ENCODE measurements at regions of chr10 and their contacts with region 1.

Region 1: GRCh38 chr10:110304780-110305421 is at the start of gene SMNDC1:
- DNase-seq: peak; percentile 99
- H3K4me3 Mint-ChIP-seq: peak within 1 kb of the TSS; percentile 95
- H3K27ac Mint-ChIP-seq: peak within 1 kb of the TSS; percentile 97
- H3K4me1 Mint-ChIP-seq: peaks cover 51% of the 10 kb centered on the region
- H3K27me3 Mint-ChIP-seq: no peaks in the 10 kb centered on the region
- total RNA-seq, gene SMNDC1: 42.4 to 46.2 TPM

Region 2: GRCh38 chr10:109529258-109529657 is 775.6 kb before region 1 on chr10:
- CTCF ChIA-PET with region 1: no interaction called
- intact Hi-C with region 1: no loop called
- DNase-seq: no peak
- H3K4me3 Mint-ChIP-seq: no peak overlapping the region
- H3K27ac Mint-ChIP-seq: no peak overlapping the region
- H3K4me1 Mint-ChIP-seq: no peaks in the 10 kb centered on the region
- H3K27me3 Mint-ChIP-seq: no peaks in the 10 kb centered on the region

Region 3: DNA sequence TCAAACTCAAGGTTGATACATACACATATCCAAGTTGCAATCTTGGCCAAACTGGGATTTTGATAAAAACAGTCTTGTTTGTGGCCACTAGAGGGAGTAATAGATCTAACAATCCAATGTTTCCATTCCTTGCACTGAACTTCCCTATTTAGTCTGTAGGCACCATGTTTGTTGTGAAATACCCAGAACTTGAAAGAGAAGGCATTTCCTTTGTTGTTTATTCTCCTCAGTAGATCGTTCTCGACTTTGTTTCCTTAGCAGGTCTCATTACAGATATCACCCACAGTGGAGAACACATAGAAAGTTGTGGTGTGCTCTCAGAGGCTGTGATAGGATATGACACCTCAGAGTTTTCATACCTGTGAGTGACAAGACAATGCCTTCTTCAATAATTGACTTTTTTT is 167.8 kb before region 1 on chr10:
- CTCF ChIA-PET with region 1: interaction called, 7 read pairs
- intact Hi-C with region 1: loop called (anchors 1 kb)
- DNase-seq: no peak
- H3K4me3 Mint-ChIP-seq: no peak overlapping the region
- H3K27ac Mint-ChIP-seq: peak overlapping the region; percentile 17
- H3K4me1 Mint-ChIP-seq: peaks cover 39% of the 10 kb centered on the region
- H3K27me3 Mint-ChIP-seq: no peaks in the 10 kb centered on the region

Region 4: GRCh38 chr10:110286841-110287240 is 18.1 kb before region 1 on chr10:
- CTCF ChIA-PET with region 1: interaction called, 4 read pairs
- intact Hi-C with region 1: loop called (anchors 1 kb)
- DNase-seq: no peak
- H3K4me3 Mint-ChIP-seq: no peak overlapping the region
- H3K27ac Mint-ChIP-seq: no peak overlapping the region
- H3K4me1 Mint-ChIP-seq: no peaks in the 10 kb centered on the region
- H3K27me3 Mint-ChIP-seq: no peaks in the 10 kb centered on the region

Region 5: GRCh38 chr10:110502851-110503301 is 198.0 kb after region 1 on chr10:
- CTCF ChIA-PET with region 1: interaction called, 8 read pairs
- intact Hi-C with region 1: loop called (anchors 1 kb)
- DNase-seq: peak; percentile 66
- H3K4me3 Mint-ChIP-seq: peak overlapping the region; percentile 97
- H3K27ac Mint-ChIP-seq: peak overlapping the region; percentile 85
- H3K4me1 Mint-ChIP-seq: peaks cover 74% of the 10 kb centered on the region
- H3K27me3 Mint-ChIP-seq: no peaks in the 10 kb centered on the region

Region 6: GRCh38 chr10:110567201-110568054 is 262.5 kb after region 1 on chr10 and contains the start of gene SMC3:
- CTCF ChIA-PET with region 1: interaction called, 11 read pairs
- intact Hi-C with region 1: loop called (anchors 1 kb)
- DNase-seq: peak; percentile 95
- H3K4me3 Mint-ChIP-seq: peak within 1 kb of the TSS; percentile 87
- H3K27ac Mint-ChIP-seq: peak within 1 kb of the TSS; percentile 98
- H3K4me1 Mint-ChIP-seq: peaks cover 31% of the 10 kb centered on the region
- H3K27me3 Mint-ChIP-seq: peaks cover 5% of the 10 kb centered on the region
- total RNA-seq, gene SMC3: 81.3 to 85.0 TPM

Region 7: GRCh38 chr10:110724116-110724921 is 419.4 kb after region 1 on chr10:
- CTCF ChIA-PET with region 1: no interaction called
- intact Hi-C with region 1: loop called (anchors 5 kb)
- DNase-seq: peak; percentile 48
- H3K4me3 Mint-ChIP-seq: no peak overlapping the region
- H3K27ac Mint-ChIP-seq: no peak overlapping the region
- H3K4me1 Mint-ChIP-seq: peaks cover 42% of the 10 kb centered on the region
- H3K27me3 Mint-ChIP-seq: no peaks in the 10 kb centered on the region

Region 8: GRCh38 chr10:110993024-110993693 is 688.3 kb after region 1 on chr10:
- CTCF ChIA-PET with region 1: no interaction called
- intact Hi-C with region 1: loop called (anchors 5 kb)
- DNase-seq: peak; percentile 21
- H3K4me3 Mint-ChIP-seq: no peak overlapping the region
- H3K27ac Mint-ChIP-seq: no peak overlapping the region
- H3K4me1 Mint-ChIP-seq: peaks cover 23% of the 10 kb centered on the region
- H3K27me3 Mint-ChIP-seq: no peaks in the 10 kb centered on the region